ENCODE measurements at regions of chr6 and their contacts with region 1.

Region 1: GRCh38 chr6:127266178-127266891 is at the start of gene RNF146:
- DNase-seq: peak; percentile 80
- H3K27ac ChIP-seq: peak within 1 kb of the TSS; percentile 95
- CTCF ChIP-seq: peak; percentile 82

Region 2: DNA sequence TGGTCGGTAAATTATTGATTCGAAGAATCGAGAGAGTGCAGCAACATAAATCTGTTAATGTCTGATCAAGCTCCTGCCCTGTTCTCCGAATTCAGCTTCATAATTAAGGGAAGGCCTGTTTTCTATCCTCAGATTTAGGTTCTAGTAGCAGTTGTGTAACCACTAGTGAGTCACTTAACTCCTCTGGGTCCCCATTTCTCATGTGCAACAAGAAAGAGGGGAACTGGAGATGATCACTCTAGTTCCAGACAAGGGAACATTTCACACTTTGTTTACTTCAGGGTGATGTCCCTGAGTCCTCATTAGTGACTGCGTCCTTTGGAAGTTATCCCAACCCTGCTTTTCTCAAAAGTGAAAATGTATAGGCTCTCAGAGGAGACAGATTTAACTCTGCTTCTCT is 67.8 kb before region 1 on chr6:
- CTCF ChIA-PET with region 1: no interaction called
- POLR2A ChIA-PET with region 1: no interaction called
- DNase-seq: no peak
- H3K27ac ChIP-seq: no peak overlapping the region
- CTCF ChIP-seq: no peak

Region 3: GRCh38 chr6:127219869-127220268 is 46.5 kb before region 1 on chr6:
- CTCF ChIA-PET with region 1: interaction called, 3 read pairs
- POLR2A ChIA-PET with region 1: interaction called, 16 read pairs
- DNase-seq: no peak
- H3K27ac ChIP-seq: no peak overlapping the region
- CTCF ChIP-seq: no peak